ENCODE measurements at regions of chr20 and their contacts with region 1.

Region 1: DNA sequence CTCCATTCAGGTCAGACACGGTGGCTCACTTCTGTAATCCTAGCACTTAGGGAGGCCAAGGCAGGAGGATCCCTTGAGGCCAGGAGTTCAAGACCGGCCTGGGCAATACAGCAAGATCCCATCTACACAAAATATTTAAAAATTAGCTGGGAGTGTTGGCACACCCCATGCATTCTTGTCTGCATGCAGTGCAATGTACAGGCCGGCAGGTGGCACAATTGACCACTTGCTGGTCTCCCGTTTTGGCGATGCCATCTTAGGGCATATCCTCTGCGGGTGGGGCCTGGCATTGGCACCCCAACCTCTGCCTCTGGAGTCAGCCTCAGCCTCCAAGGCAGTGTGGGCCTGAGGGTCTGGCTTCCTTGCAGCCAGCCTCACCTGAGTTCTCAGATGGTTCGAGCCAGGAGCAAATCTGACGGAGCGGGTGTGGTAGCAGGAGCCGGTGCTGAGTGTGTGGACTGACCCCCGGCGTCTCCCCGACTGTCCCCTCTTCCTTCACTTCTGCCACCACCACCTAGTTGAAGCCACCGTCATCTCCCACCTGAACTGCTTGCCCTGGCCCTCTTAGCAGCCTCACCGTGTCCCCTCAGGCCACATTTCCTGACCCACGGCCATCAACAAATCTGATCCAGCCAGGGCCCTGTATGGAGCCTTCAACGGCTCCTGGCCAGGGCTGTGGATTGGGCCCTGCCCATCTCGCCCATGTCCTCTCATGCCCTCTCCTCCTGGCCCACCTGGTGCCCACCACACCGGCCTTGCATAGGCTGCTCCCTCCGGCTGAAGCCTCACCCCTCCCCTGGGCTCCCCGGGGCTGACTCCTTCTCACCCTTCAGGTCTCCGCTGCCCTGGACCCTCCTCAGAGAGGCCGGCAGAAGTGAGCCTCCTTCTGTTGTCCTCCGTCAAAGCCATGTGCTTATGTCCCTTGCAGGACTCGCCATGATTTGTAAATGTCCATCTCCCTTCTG is 44.0 kb downstream of the EFCAB8 start:
- DNase-seq: peak; percentile 82
- ATAC-seq: peak; percentile 56

Region 2: GRCh38 chr20:32779500-32780211 is 123.1 kb before region 1 on chr20:
- intact Hi-C with region 1: no loop called
- DNase-seq: no peak
- ATAC-seq: no peak

Region 3: GRCh38 chr20:32858701-32859372 is 43.9 kb before region 1 on chr20 and contains the start of gene EFCAB8:
- intact Hi-C with region 1: no loop called
- DNase-seq: no peak
- ATAC-seq: peak; percentile 26
- total RNA-seq, gene EFCAB8: 0.43 TPM

Region 4: DNA sequence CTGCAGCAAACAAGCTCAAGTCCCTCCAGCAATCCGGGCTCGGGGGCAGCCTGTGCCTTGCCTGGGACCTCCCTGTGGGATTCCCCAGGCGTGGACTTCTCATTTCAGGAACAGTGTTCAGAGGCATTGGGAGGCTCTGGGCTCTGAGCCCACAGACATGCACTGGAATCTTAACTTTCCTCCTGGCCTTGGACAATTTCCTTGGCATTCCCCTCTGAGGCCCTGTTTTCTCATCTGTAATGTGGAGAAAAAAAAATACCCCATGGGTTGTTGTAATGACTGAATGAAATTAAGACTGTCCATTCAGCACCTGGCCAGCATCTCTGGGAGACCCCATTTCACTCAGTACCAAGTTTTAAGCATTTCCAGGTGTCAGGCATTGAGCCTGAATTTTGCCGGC is 194.3 kb after region 1 on chr20:
- intact Hi-C with region 1: loop called (anchors 1 kb)
- DNase-seq: no peak
- ATAC-seq: no peak

Region 5: GRCh38 chr20:33281550-33282146 is 378.9 kb after region 1 on chr20:
- intact Hi-C with region 1: loop called (anchors 5 kb)
- DNase-seq: no peak
- ATAC-seq: no peak

Region 6: DNA sequence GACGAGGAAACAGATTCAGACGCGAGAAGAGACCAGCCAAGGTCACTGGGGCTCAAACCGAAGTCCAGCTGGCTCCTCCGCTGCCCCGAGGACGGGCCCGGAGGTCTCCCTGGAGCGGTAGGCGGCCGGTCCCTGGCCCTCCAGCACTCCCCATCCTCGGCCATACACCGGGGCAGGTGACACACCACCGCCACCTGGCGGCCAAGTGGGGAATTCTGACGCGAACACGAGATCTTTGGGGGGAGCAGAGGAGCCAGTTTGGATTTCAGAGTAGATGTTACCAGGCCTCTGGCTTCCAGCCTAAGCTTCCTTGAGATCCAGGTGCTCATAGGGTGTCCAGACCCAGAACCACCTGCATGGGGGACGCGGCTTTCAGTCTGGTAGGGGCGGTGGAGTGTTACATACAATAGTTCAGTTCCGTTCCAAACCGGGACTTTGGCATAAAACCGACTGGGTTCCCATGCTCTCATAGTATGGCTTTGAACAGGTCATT is 396.4 kb after region 1 on chr20:
- intact Hi-C with region 1: loop called (anchors 2 kb)
- DNase-seq: peak; percentile 81
- ATAC-seq: peak; percentile 50

Region 7: GRCh38 chr20:33663161-33664094 is 760.7 kb after region 1 on chr20:
- intact Hi-C with region 1: no loop called
- DNase-seq: peak; percentile 94
- ATAC-seq: peak; percentile 55